ENCODE measurements at regions of chr2 and their contacts with region 1.

Region 1: DNA sequence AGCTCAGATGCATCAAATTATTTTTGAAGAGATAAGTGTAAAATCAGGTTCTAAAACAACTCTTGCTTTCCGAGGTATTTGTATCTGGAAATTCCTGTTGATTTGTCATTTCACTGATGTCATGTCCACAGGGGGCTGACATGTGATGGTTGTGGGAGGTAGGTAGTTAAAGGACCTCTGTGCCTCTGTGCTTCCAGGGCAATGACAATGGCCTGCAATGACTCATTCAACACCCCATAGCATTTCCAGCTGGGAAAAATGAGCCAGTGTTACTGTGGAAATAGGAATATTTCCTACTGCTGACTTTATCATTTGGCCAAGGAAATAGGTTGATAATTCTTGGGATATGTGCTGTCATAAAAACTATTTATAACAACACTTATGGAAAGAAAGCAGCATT is 86.2 kb upstream of the CCDC195 start:
- DNase-seq: no peak
- ATAC-seq: no peak
- H3K4me3 ChIP-seq: no peak overlapping the region
- H3K27ac ChIP-seq: no peak overlapping the region
- H3K4me1 ChIP-seq: peaks cover 0 to 4% of the 10 kb centered on the region in 2 donors
- H3K27me3 ChIP-seq: no peaks in the 10 kb centered on the region

Region 2: GRCh38 chr2:224357098-224357901 is 445.1 kb before region 1 on chr2:
- intact Hi-C with region 1: no loop called
- DNase-seq: no peak
- ATAC-seq: peak; percentile 72
- H3K4me3 ChIP-seq: no peak overlapping the region
- H3K27ac ChIP-seq: no peak overlapping the region
- H3K4me1 ChIP-seq: no peaks in the 10 kb centered on the region
- H3K27me3 ChIP-seq: no peaks in the 10 kb centered on the region

Region 3: GRCh38 chr2:225002039-225002655 is 199.7 kb after region 1 on chr2:
- intact Hi-C with region 1: loop called (anchors 5 kb)
- DNase-seq: peak in 1 of 2 donors; percentile 53
- ATAC-seq: peak; percentile 85
- H3K4me3 ChIP-seq: no peak overlapping the region
- H3K27ac ChIP-seq: no peak overlapping the region
- H3K4me1 ChIP-seq: no peaks in the 10 kb centered on the region
- H3K27me3 ChIP-seq: no peaks in the 10 kb centered on the region

Measured in aorta (tissue), 5 donors.